ENCODE measurements at regions of chr12 and their contacts with region 1.

Region 1: GRCh38 chr12:96061864-96062453 is 26.6 kb upstream of the LTA4H start:
- DNase-seq: peak in 2 of 3 donors; percentile 50 to 59
- ATAC-seq: peak; percentile 80 to 89 (median 86)
- H3K4me3 ChIP-seq: no peak overlapping the region
- H3K27ac ChIP-seq: no peak overlapping the region
- H3K4me1 ChIP-seq: peaks cover 0 to 5% (median 0%) of the 10 kb centered on the region in 4 donors
- H3K27me3 ChIP-seq: no peaks in the 10 kb centered on the region
- CTCF ChIP-seq: peak; percentile 77 to 89 (median 82)
- POLR2A ChIP-seq: no peak

Region 2: GRCh38 chr12:95918194-95918993 is 143.6 kb before region 1 on chr12:
- intact Hi-C with region 1: no loop called
- DNase-seq: peak in 1 of 3 donors; percentile 55
- ATAC-seq: peak; percentile 99 to 100 (median 99)
- H3K4me3 ChIP-seq: no peak overlapping the region
- H3K27ac ChIP-seq: no peak overlapping the region
- H3K4me1 ChIP-seq: no peaks in the 10 kb centered on the region
- H3K27me3 ChIP-seq: no peaks in the 10 kb centered on the region
- CTCF ChIP-seq: peak; percentile 75 to 90 (median 86)
- POLR2A ChIP-seq: no peak

Region 3: GRCh38 chr12:96208801-96209549 is 147.0 kb after region 1 on chr12:
- intact Hi-C with region 1: loop called (anchors 10 kb)
- DNase-seq: no peak
- ATAC-seq: peak; percentile 28 to 71 (median 50)
- H3K4me3 ChIP-seq: no peak overlapping the region
- H3K27ac ChIP-seq: no peak overlapping the region
- H3K4me1 ChIP-seq: no peaks in the 10 kb centered on the region
- H3K27me3 ChIP-seq: no peaks in the 10 kb centered on the region
- CTCF ChIP-seq: peak in 1 of 4 donors; percentile 6
- POLR2A ChIP-seq: no peak

Region 4: DNA sequence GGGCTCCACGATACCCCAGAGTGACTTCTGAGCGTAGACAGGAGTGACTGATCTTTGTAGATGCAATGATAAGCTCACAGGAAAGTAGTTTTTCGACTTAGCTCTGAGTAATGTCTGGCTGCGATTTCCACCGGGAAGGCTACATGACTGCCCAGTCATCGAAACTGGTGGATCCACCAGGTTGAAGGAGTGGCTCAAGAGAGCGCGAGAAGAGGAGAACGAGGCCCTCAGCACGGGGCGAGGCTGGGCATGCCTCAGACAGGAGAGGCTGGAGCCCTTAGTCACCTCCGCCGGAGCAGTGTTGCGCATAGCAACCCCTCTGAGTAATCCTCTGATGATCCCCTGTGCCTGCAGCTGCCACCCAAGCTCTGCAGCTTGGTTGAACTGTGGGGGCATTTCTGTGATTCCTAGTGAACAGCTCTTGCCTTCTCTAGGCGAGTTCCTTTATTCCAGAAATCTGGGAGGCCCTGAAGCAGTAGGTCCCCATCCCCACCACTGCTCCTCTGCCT is 157.8 kb after region 1 on chr12:
- intact Hi-C with region 1: loop called in 1 of 2 experiments (anchors 10 kb)
- DNase-seq: no peak
- ATAC-seq: no peak
- H3K4me3 ChIP-seq: no peak overlapping the region
- H3K27ac ChIP-seq: no peak overlapping the region
- H3K4me1 ChIP-seq: peaks cover 0 to 9% (median 0%) of the 10 kb centered on the region in 4 donors
- H3K27me3 ChIP-seq: no peaks in the 10 kb centered on the region
- CTCF ChIP-seq: no peak
- POLR2A ChIP-seq: no peak